B cell (primary cell): ENCODE measurements at regions of chr3 and their contacts with region 1.

Region 1: DNA sequence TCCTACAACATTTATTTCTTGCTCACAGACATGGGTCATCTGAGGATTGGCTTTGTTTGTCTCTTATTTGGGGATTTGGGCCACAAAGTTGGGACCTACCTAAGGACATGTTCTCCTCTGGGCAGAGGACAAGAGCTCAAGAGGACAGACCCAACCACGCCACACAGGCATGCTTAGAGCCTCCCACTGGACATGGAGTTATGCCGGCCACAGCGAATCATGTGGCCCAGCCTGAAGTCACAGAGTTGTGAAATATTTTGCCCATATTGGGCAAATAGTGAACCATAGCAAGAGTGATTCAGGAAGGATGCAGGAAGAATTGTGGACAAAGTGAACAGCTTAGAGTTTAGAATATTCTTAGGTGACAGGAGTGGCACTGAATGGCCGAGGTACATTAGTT is 9.9 kb downstream of the TRAK1 start:
- DNase-seq: no peak
- ATAC-seq: no peak
- H3K4me3 ChIP-seq: no peak overlapping the region
- H3K4me3 Mint-ChIP-seq: no peak overlapping the region
- H3K27ac ChIP-seq: no peak overlapping the region
- H3K27ac Mint-ChIP-seq: no peak overlapping the region
- H3K4me1 ChIP-seq: peaks cover 4 to 23% of the 10 kb centered on the region in 2 donors
- H3K4me1 Mint-ChIP-seq: peaks cover 41% of the 10 kb centered on the region
- H3K27me3 ChIP-seq: no peaks in the 10 kb centered on the region
- H3K27me3 Mint-ChIP-seq: no peaks in the 10 kb centered on the region
- CTCF ChIP-seq: no peak

Region 2: DNA sequence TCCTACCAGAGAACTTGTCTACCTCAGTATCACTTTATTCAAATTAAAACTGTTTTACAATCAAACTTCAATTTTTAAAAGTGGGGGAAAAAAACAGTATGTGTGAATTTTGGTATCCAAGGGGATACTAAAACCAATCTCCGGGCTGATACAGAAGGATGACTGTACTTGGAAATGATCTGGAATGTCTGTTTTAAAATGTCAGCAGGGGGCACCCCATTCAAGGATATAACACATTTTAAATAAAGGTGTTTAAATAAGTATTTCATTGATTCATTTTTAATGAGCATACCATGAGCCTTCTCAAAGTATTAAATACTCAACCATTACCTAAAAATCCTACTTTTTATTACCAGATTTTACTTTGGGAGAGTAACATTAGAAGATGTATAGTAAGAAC is 207.1 kb before region 1 on chr3:
- CTCF ChIA-PET with region 1: interaction called, 97 read pairs
- POLR2A ChIA-PET with region 1: no interaction called
- intact Hi-C with region 1: loop called (anchors 1 kb)
- DNase-seq: peak; percentile 63
- ATAC-seq: no peak
- H3K4me3 ChIP-seq: no peak overlapping the region
- H3K4me3 Mint-ChIP-seq: no peak overlapping the region
- H3K27ac ChIP-seq: no peak overlapping the region
- H3K27ac Mint-ChIP-seq: no peak overlapping the region
- H3K4me1 ChIP-seq: no peaks in the 10 kb centered on the region
- H3K4me1 Mint-ChIP-seq: no peaks in the 10 kb centered on the region
- H3K27me3 ChIP-seq: no peaks in the 10 kb centered on the region
- H3K27me3 Mint-ChIP-seq: no peaks in the 10 kb centered on the region
- CTCF ChIP-seq: peak; percentile 80

Region 3: DNA sequence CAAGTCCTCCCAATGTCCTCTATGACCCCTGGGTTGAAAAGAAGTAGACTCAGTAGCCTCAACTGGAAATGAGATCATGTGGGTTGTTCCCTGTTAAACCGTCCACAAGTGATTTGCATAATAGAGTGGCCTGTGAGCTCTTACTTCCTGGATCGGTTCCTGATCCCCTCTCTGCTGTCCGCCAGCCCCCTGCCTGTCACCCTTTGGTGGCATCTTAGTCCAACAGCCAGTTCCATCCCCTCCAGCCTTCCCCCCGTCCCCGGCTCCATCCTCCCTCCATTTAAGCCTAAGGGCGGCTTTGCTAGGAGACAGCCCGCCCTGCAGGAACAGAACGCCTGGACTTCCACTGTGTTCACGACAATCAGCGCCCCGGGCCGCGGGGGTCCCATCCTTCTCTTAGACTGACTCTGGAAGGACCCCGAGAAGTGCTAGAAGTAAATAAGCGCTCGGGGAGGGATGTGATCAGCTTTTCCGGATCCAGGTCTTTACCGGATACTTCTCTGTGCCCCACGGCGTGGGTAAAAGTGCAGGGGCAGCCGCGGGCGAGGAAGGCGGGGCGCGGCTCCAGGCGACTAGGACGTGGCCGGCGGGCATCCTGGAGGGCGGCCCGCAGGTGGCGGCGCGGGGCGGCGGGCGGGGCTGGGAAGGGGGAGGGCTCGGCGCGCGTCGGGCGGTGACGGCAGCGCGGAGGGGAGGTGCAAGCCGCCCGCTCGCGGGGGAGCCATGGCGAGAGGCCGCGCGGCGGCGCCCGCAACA is 87.9 kb before region 1 on chr3:
- CTCF ChIA-PET with region 1: interaction called, 68 read pairs
- POLR2A ChIA-PET with region 1: interaction called, 7 read pairs
- intact Hi-C with region 1: loop called (anchors 1 kb)
- DNase-seq: peak; percentile 92
- ATAC-seq: peak; percentile 71
- H3K4me3 ChIP-seq: peak overlapping the region; percentile 60 to 96 (median 92)
- H3K4me3 Mint-ChIP-seq: peak overlapping the region; percentile 97
- H3K27ac ChIP-seq: peak overlapping the region; percentile 99 to 100
- H3K27ac Mint-ChIP-seq: peak overlapping the region; percentile 99
- H3K4me1 ChIP-seq: peaks cover 44 to 49% of the 10 kb centered on the region in 2 donors
- H3K4me1 Mint-ChIP-seq: peaks cover 56% of the 10 kb centered on the region
- H3K27me3 ChIP-seq: no peaks in the 10 kb centered on the region
- H3K27me3 Mint-ChIP-seq: no peaks in the 10 kb centered on the region
- CTCF ChIP-seq: no peak

Region 4: GRCh38 chr3:42052484-42053351 is 48.3 kb before region 1 on chr3:
- CTCF ChIA-PET with region 1: interaction called, 22 read pairs
- POLR2A ChIA-PET with region 1: no interaction called
- intact Hi-C with region 1: loop called (anchors 5 kb)
- DNase-seq: no peak
- ATAC-seq: no peak
- H3K4me3 ChIP-seq: no peak overlapping the region
- H3K4me3 Mint-ChIP-seq: peak overlapping the region; percentile 1
- H3K27ac ChIP-seq: peak overlapping the region in 1 of 2 donors; percentile 54
- H3K27ac Mint-ChIP-seq: peak overlapping the region; percentile 62
- H3K4me1 ChIP-seq: peaks cover 61 to 71% of the 10 kb centered on the region in 2 donors
- H3K4me1 Mint-ChIP-seq: peaks cover 82% of the 10 kb centered on the region
- H3K27me3 ChIP-seq: no peaks in the 10 kb centered on the region
- H3K27me3 Mint-ChIP-seq: no peaks in the 10 kb centered on the region
- CTCF ChIP-seq: no peak

Region 5: GRCh38 chr3:42080452-42080891 is 20.6 kb before region 1 on chr3:
- CTCF ChIA-PET with region 1: interaction called, 66 read pairs
- POLR2A ChIA-PET with region 1: no interaction called
- intact Hi-C with region 1: no loop called
- DNase-seq: peak; percentile 56
- ATAC-seq: peak; percentile 93
- H3K4me3 ChIP-seq: peak overlapping the region in 1 of 5 experiments; percentile 7
- H3K4me3 Mint-ChIP-seq: peak overlapping the region; percentile 87
- H3K27ac ChIP-seq: peak overlapping the region; percentile 65 to 84
- H3K27ac Mint-ChIP-seq: peak overlapping the region; percentile 99
- H3K4me1 ChIP-seq: peaks cover 48 to 57% of the 10 kb centered on the region in 2 donors
- H3K4me1 Mint-ChIP-seq: peaks cover 77% of the 10 kb centered on the region
- H3K27me3 ChIP-seq: no peaks in the 10 kb centered on the region
- H3K27me3 Mint-ChIP-seq: no peaks in the 10 kb centered on the region
- CTCF ChIP-seq: no peak

Region 6: DNA sequence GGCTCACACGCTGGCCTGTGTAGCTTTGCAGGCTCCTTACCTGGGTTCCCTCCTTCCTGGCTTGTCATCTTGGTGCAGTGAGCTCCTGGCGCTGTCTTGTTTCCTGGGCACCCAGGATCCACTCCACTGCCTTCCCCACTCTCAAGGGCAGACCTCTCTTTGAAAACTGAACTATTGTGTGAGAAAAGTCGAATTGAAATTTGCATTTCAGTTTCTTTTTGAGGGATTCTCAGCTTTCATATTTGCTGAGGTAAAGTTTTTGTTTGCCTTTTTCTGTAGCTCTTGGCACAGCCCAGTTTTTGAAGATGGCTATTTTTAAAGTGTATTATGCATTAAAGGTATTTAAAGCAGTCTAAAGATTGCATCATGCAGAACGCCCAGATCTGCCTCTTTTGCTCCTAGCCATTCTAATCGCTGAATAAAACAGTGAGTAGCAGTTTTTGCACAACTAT is 94.9 kb after region 1 on chr3:
- CTCF ChIA-PET with region 1: interaction called, 49 read pairs
- POLR2A ChIA-PET with region 1: no interaction called
- intact Hi-C with region 1: no loop called
- DNase-seq: no peak
- ATAC-seq: no peak
- H3K4me3 ChIP-seq: no peak overlapping the region
- H3K4me3 Mint-ChIP-seq: no peak overlapping the region
- H3K27ac ChIP-seq: no peak overlapping the region
- H3K27ac Mint-ChIP-seq: peak overlapping the region; percentile 53
- H3K4me1 ChIP-seq: peaks cover 15 to 33% of the 10 kb centered on the region in 2 donors
- H3K4me1 Mint-ChIP-seq: peaks cover 36% of the 10 kb centered on the region
- H3K27me3 ChIP-seq: no peaks in the 10 kb centered on the region
- H3K27me3 Mint-ChIP-seq: no peaks in the 10 kb centered on the region
- CTCF ChIP-seq: no peak